Dendritic cell treated with granulocyte-macrophage colony-stimulating factor and Interleukin-4, amounts not matched to agents 40 ng/mL and 50 ng/mL, for 4 days (primary cell): ENCODE measurements at regions of chrX and their contacts with region 1.

Region 1: DNA sequence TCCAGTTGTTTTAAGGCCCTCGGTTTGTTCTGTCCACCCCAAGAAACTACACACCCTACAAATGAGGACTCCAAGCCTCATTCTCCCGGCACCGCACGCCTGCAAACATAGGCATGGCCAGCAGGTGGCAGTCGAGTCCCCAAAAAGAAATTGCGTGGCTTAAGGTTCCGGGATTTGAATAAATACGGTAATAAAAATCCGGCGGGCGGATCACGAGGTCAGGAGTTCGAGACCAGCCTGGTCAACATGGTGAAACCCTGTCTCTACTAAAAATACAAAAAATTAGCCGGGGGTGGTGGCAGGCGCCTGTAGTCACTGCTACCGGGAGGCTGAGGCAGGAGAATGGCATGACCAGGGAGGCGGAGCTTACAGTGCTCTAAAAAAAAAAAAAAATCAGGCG is 21.8 kb upstream of the CSF2RA start:
- H3K4me3 Mint-ChIP-seq: no peak overlapping the region
- H3K27ac Mint-ChIP-seq: peak overlapping the region; percentile 94
- H3K4me1 Mint-ChIP-seq: peaks cover 65% of the 10 kb centered on the region
- H3K27me3 Mint-ChIP-seq: peaks cover 7% of the 10 kb centered on the region

Region 2: GRCh38 chrX:1274786-1275185 is 28.0 kb after region 1 on chrX:
- intact Hi-C with region 1: loop called (anchors 2 kb)
- H3K4me3 Mint-ChIP-seq: peak overlapping the region; percentile 74
- H3K27ac Mint-ChIP-seq: peak overlapping the region; percentile 90
- H3K4me1 Mint-ChIP-seq: peaks cover 71% of the 10 kb centered on the region
- H3K27me3 Mint-ChIP-seq: no peaks in the 10 kb centered on the region

Region 3: DNA sequence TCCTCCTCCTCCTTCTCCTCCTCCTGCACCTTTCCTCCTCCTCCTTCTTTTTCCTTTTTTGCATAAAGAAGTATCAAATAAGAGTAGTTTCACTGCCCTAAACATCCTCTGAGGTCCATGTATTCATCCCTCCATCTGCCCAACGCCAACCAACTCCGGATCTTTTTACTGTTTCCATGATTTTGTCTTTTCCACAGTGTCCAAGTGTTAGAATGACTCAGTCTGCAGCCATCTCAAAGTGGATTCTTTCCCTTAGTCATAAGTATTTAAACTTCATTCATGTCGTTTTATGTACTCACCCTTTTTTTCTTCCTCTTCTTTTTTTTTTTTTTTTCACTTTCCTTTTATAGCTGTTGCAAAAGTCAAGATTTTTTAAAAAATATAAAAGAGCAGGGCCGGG is 34.7 kb after region 1 on chrX:
- intact Hi-C with region 1: loop called (anchors 5 kb)
- H3K4me3 Mint-ChIP-seq: peak overlapping the region; percentile 45
- H3K27ac Mint-ChIP-seq: peak overlapping the region; percentile 84
- H3K4me1 Mint-ChIP-seq: peaks cover 74% of the 10 kb centered on the region
- H3K27me3 Mint-ChIP-seq: no peaks in the 10 kb centered on the region

Region 4: GRCh38 chrX:1316527-1316926 is 69.7 kb after region 1 on chrX:
- intact Hi-C with region 1: loop called (anchors 2 kb)
- H3K4me3 Mint-ChIP-seq: peak overlapping the region; percentile 79
- H3K27ac Mint-ChIP-seq: peak overlapping the region; percentile 99
- H3K4me1 Mint-ChIP-seq: peaks cover 85% of the 10 kb centered on the region
- H3K27me3 Mint-ChIP-seq: no peaks in the 10 kb centered on the region

Region 5: GRCh38 chrX:1391707-1392375 is 145.0 kb after region 1 on chrX and contains the start of gene SLC25A6:
- intact Hi-C with region 1: loop called (anchors 5 kb)
- H3K4me3 Mint-ChIP-seq: peak within 1 kb of the TSS; percentile 97
- H3K27ac Mint-ChIP-seq: peak within 1 kb of the TSS; percentile 99
- H3K4me1 Mint-ChIP-seq: peaks cover 72% of the 10 kb centered on the region
- H3K27me3 Mint-ChIP-seq: no peaks in the 10 kb centered on the region